OCI-LY7 (cell line): ENCODE measurements at regions of chr1 and their contacts with region 1.

Region 1: DNA sequence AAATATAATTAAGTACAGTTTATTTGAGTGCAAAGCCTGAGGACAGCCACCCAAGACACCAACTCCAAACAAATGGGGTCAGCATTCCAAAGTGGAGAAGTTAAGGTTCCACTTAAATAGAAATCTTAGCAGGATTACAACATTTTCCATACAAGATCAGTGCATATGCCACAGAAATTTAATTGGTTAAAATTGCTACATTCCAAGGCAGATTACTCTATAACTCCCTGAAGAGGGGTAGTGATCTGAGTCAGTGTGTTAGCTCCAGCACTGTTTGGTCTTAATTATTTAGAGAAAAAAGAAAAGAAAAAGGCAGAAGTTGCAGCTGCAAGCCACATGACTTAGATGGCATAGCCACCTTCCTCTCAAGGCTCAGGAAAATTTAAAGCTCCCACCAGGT is 297.5 kb downstream of the HHIPL2 start:
- DNase-seq: no peak
- H3K4me3 ChIP-seq: no peak overlapping the region
- H3K27ac ChIP-seq: no peak overlapping the region
- H3K4me1 ChIP-seq: no peaks in the 10 kb centered on the region
- CTCF ChIP-seq: no peak

Region 2: DNA sequence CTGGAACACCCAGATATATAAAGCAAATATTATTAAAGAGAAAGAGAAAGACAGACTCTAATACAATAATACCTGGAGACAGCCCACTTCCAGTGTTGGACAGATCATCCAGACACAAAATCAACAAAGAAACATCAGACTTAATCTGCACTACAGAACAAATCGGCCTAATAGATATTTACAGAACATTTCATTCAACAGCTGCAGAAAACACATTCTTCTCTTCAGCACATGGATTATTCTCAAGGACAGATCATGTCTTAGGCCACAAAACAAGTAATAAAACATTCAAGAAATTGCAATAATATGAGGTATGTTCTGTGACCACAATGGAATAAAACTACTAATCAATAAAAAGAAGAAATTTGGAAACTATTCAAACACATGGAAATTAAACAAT is 110.2 kb before region 1 on chr1:
- CTCF ChIA-PET with region 1: no interaction called
- POLR2A ChIA-PET with region 1: no interaction called
- intact Hi-C with region 1: no loop called
- DNase-seq: no peak
- H3K4me3 ChIP-seq: no peak overlapping the region
- H3K27ac ChIP-seq: no peak overlapping the region
- H3K4me1 ChIP-seq: no peaks in the 10 kb centered on the region
- CTCF ChIP-seq: no peak

Region 3: GRCh38 chr1:222438661-222439060 is 188.3 kb after region 1 on chr1:
- CTCF ChIA-PET with region 1: no interaction called
- POLR2A ChIA-PET with region 1: no interaction called
- intact Hi-C with region 1: loop called (anchors 10 kb)
- DNase-seq: no peak
- H3K4me3 ChIP-seq: no peak overlapping the region
- H3K27ac ChIP-seq: no peak overlapping the region
- H3K4me1 ChIP-seq: no peaks in the 10 kb centered on the region
- CTCF ChIP-seq: no peak